Activated T-helper 1 cell treated with anti-CD3 and anti-CD28 coated beads, Interleukin-12 subunit alpha, Interleukin-12 subunit beta, Interleukin-2, Interleukin-4 antibody, amounts not matched to agents 30 ng/mL and 10 ng/mL and 1 ng/mL, durations not matched to agents 14 hours and 24 hours and 36 hours (primary cell): ENCODE measurements at regions of chr13 and their contacts with region 1.

Region 1: GRCh38 chr13:50911937-50912795 is 2.6 kb downstream of the RNASEH2B start:
- DNase-seq: peak; percentile 87
- H3K4me3 Mint-ChIP-seq: peak overlapping the region; percentile 82
- H3K27ac Mint-ChIP-seq: peak overlapping the region; percentile 37
- H3K4me1 Mint-ChIP-seq: peaks cover 68% of the 10 kb centered on the region
- H3K27me3 Mint-ChIP-seq: no peaks in the 10 kb centered on the region

Region 2: DNA sequence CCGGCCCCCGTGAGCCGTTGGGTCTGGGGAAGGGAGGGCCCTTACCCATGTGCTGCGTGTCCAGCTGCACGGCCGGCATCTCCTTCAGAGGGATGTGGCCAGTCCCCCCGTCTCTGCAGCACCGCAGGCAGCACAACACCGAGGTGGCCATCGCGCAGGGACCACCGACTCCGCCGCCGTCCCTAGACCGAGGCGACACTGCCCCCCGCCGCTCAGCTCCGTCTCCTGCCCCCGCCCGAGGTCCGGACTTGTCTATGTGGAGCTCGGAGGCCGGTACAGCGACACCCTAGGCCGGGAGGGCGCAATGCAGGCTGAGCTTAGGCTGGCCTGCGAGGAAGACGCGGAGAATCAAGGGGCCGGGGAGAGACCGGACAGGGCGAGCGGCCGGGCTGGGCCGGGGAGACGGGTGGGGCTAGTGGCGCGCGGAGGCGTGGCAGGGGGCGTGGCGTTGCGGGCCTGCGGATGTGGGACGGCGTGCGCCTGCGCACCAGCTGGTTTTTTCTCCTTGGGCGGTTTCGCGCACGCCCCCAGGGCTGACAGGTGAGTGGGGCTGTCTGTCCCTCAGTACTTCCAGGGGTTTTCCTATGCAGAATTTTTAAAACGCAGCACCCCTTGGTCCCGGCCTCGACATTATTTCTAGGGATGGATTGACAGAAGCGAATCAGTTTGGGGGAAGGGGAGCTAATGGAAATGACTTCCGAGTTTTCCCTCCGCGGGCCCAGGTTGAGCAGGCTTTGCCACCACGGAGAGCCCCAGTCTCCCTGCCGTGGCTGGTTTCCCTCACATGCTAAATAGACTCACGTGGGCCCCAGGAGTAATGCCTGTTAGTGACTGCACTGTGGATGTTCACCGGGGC is 975.9 kb before region 1 on chr13 and contains the start of gene SPRYD7:
- intact Hi-C with region 1: loop called (anchors 1 kb)
- DNase-seq: peak; percentile 92
- H3K4me3 Mint-ChIP-seq: peak within 1 kb of the TSS; percentile 94
- H3K27ac Mint-ChIP-seq: peak within 1 kb of the TSS; percentile 87
- H3K4me1 Mint-ChIP-seq: peaks cover 11% of the 10 kb centered on the region
- H3K27me3 Mint-ChIP-seq: peaks cover 22% of the 10 kb centered on the region
- total RNA-seq, gene SPRYD7: 6.9 and 7.0 TPM in 2 replicates

Region 3: GRCh38 chr13:49996951-49997895 is 914.9 kb before region 1 on chr13 and contains the start of gene TRIM13:
- intact Hi-C with region 1: loop called (anchors 1 kb)
- DNase-seq: peak; percentile 76
- H3K4me3 Mint-ChIP-seq: peak within 1 kb of the TSS; percentile 87
- H3K27ac Mint-ChIP-seq: peak within 1 kb of the TSS; percentile 82
- H3K4me1 Mint-ChIP-seq: peaks cover 54% of the 10 kb centered on the region
- H3K27me3 Mint-ChIP-seq: no peaks in the 10 kb centered on the region
- total RNA-seq, gene TRIM13: 14.7 and 16.5 TPM in 2 replicates

Region 4: DNA sequence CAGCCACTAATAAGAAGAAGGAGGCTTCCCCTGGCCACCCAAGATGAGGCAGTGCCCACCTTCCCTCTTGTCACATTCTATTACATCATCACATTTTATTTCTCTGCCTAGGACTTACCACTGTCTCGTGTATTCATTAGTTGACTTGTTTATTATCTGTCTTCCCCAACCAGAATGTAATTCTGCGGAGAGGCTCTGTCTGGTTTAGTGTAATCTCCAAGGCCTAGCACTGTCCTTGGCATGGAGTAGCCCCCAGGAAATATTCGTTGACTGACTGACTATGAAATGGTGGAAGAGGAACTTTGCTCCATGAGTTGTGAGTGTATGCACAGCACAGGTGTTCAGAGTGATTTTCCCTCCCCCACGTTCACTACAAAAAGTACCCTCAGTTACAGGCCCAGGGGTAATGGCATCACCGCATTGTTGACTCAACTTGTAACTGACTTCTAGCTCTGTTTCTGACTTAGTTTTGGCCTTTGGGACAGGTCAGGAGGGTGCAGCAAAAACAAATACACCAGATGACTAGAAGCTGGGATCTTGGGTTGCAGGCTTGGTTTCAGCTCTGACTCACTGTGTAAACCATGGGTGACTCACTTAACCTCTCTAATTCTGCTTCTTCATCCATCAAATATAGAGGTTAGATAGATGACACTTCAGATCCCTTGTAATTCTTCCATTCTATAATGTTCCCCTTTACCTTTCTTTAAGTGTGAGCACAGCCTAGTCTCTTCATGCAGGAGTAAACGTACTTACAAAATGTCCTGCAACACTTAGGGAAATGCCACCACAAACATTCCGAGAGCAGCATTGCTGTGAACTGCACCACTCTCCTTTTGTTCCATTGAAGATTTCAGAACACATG is 667.2 kb before region 1 on chr13:
- intact Hi-C with region 1: loop called (anchors 5 kb)
- DNase-seq: peak; percentile 53
- H3K4me3 Mint-ChIP-seq: peak overlapping the region; percentile 20
- H3K27ac Mint-ChIP-seq: peak overlapping the region; percentile 73
- H3K4me1 Mint-ChIP-seq: peaks cover 56% of the 10 kb centered on the region
- H3K27me3 Mint-ChIP-seq: peaks cover 21% of the 10 kb centered on the region

Region 5: DNA sequence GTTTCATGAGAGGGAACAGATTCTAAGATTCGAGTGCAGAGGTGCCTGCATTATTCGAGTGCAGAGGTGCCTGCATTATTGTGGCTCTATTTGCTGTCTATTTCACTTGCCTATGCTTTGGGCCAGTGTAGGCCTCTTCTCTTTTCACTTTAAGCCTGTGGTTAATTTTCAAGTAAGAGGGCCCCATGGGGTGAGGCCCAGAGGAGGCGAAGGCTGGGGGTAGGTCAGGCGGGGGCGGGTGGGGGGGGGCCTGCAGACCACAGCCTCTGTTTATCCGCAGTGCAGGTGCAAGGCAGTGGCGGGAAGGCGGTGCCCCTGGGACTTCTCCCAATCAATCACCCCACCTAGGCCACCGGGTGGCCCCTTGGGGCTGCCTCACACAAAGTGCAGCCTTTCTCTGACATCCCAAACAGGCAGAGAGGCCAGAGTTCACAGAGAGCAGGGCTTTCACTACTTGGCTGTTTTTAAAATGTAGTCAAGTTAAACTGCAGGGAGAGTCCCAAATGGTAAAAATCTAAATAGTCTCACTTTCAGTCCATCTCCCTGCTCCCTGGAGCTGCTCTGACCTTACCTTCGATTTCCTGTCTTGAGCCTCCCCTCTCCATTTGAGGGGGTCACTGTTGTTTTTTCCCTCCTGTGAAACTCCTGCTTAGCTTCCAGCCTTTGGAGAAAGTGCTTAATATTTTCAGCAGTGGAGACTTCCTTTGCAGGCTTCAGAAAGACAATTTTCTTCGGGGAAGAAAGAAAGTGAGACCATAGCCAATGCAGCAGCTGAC is 317.7 kb before region 1 on chr13:
- intact Hi-C with region 1: loop called (anchors 5 kb)
- DNase-seq: no peak
- H3K4me3 Mint-ChIP-seq: peak overlapping the region; percentile 12
- H3K27ac Mint-ChIP-seq: peak overlapping the region; percentile 10
- H3K4me1 Mint-ChIP-seq: peaks cover 32% of the 10 kb centered on the region
- H3K27me3 Mint-ChIP-seq: peaks cover 4% of the 10 kb centered on the region

Region 6: DNA sequence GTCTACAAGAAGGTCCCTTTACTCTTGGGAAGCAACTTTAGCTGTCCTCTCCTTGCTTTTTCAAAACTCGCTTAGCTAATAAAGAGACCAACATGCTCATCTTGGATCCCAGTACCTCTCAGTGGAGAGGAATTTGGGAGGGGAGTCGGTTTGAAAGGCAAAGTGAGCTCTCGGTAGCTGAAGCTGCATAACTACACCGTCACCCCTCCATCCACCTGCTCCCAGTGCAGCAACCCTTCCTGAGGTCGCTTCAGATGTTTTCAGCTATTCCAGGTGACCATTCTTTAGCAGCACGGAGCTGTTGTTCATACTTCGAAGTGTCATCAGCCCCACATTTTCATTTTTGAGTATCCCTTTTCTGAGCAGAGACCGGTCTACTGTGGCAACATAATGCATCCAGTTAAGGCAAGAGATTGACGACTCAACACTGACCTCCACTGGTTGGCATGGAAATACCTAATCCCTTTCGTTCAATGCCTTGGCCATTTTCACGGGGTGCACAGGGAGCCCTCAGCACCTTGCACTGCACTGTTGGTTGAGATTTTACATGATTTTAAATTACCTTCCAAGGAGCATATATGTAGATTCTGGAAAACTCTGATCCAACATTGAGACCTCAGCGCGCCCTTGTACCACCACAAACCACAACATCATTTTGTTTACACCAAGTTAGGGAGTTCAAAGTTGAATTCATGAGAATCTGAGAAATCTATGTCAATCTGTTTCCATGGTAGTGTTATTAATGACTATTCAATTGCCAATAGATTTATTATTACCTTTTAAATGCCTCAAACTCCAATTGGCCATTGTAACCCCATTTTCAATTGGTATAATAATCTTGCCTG is 110.9 kb before region 1 on chr13:
- intact Hi-C with region 1: loop called (anchors 1 kb)
- DNase-seq: peak; percentile 50
- H3K4me3 Mint-ChIP-seq: no peak overlapping the region
- H3K27ac Mint-ChIP-seq: no peak overlapping the region
- H3K4me1 Mint-ChIP-seq: peaks cover 25% of the 10 kb centered on the region
- H3K27me3 Mint-ChIP-seq: no peaks in the 10 kb centered on the region

Region 7: GRCh38 chr13:50829896-50830295 is 82.3 kb before region 1 on chr13:
- intact Hi-C with region 1: no loop called
- DNase-seq: no peak
- H3K4me3 Mint-ChIP-seq: no peak overlapping the region
- H3K27ac Mint-ChIP-seq: no peak overlapping the region
- H3K4me1 Mint-ChIP-seq: peaks cover 15% of the 10 kb centered on the region
- H3K27me3 Mint-ChIP-seq: peaks cover 14% of the 10 kb centered on the region

Region 8: GRCh38 chr13:51070005-51070649 is 158.0 kb after region 1 on chr13:
- intact Hi-C with region 1: loop called (anchors 1 kb)
- DNase-seq: peak; percentile 70
- H3K4me3 Mint-ChIP-seq: no peak overlapping the region
- H3K27ac Mint-ChIP-seq: no peak overlapping the region
- H3K4me1 Mint-ChIP-seq: peaks cover 14% of the 10 kb centered on the region
- H3K27me3 Mint-ChIP-seq: peaks cover 11% of the 10 kb centered on the region